B cell (primary cell): ENCODE measurements at regions of chr1 and their contacts with region 1.

Region 1: GRCh38 chr1:16904560-16905111 is 8.9 kb downstream of the RNU1-2 start:
- DNase-seq: peak; percentile 98
- ATAC-seq: peak; percentile 94
- H3K4me3 ChIP-seq: peak overlapping the region; percentile 50 to 68 (median 66)
- H3K4me3 Mint-ChIP-seq: no peak overlapping the region
- H3K27ac ChIP-seq: peak overlapping the region; percentile 96 to 99
- H3K27ac Mint-ChIP-seq: no peak overlapping the region
- H3K4me1 ChIP-seq: peaks cover 38 to 54% of the 10 kb centered on the region in 2 donors
- H3K4me1 Mint-ChIP-seq: peaks cover 34% of the 10 kb centered on the region
- H3K27me3 ChIP-seq: no peaks in the 10 kb centered on the region
- H3K27me3 Mint-ChIP-seq: no peaks in the 10 kb centered on the region
- CTCF ChIP-seq: no peak

Region 2: DNA sequence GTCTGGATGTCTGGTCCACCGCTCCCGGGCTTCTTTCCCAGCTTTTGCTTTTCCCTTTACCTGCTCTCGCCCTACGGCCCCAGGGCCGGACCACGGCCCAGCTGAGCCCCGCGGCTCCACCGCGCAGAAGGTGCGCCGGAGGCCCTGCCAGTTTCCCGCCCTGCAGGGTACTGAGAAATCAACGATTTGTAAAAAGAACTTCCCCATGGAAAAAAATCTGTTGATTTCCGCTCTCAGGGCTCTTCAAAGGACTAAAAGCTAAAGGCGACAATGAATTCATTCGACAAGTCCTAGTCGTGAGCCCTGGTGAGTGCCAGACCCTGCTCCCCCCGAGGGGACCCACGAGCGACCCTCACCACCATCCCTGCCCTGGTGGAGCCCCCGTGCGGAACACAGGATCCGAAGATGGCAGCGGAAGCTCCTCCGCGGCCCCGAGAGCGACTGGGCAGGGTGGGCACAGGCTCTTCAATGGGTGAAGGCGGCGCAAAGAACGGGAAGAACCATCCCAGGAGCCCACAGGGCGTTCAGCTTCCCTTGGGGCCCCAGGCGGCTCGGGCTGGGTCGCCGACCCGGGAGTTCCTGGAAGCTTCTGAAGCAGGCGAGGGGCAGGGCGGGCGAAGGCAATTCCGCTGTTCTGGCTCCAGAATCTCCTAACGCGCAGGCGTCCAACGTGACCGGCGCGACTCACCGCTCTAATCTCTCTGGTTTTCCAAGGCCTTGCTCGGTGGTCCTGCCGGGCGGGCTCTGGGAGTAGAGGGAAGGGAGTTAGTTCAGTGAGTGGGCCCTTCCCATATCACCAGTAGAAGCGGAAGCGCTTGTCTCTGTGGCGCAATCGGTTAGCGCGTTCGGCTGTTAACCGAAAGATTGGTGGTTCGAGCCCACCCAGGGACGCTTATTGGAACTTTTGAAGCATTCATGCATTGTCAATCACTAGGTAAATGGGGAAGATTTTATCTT is 15.5 kb before region 1 on chr1:
- CTCF ChIA-PET with region 1: interaction called, 6 read pairs
- POLR2A ChIA-PET with region 1: interaction called, 16 read pairs
- intact Hi-C with region 1: no loop called
- DNase-seq: peak; percentile 75
- ATAC-seq: peak; percentile 71
- H3K4me3 ChIP-seq: peak overlapping the region; percentile 11 to 78 (median 73)
- H3K4me3 Mint-ChIP-seq: peak overlapping the region; percentile 98
- H3K27ac ChIP-seq: peak overlapping the region; percentile 76 to 79
- H3K27ac Mint-ChIP-seq: peak overlapping the region; percentile 99
- H3K4me1 ChIP-seq: peaks cover 11 to 13% of the 10 kb centered on the region in 2 donors
- H3K4me1 Mint-ChIP-seq: peaks cover 18% of the 10 kb centered on the region
- H3K27me3 ChIP-seq: no peaks in the 10 kb centered on the region
- H3K27me3 Mint-ChIP-seq: no peaks in the 10 kb centered on the region
- CTCF ChIP-seq: no peak